ENCODE measurements at regions of chr11 and their contacts with region 1.

Region 1: GRCh38 chr11:101786916-101787315 is 127.9 kb upstream of the CEP126 start:
- DNase-seq: no peak
- H3K4me3 ChIP-seq: no peak overlapping the region
- CTCF ChIP-seq: no peak
- POLR2A ChIP-seq: no peak

Region 2: DNA sequence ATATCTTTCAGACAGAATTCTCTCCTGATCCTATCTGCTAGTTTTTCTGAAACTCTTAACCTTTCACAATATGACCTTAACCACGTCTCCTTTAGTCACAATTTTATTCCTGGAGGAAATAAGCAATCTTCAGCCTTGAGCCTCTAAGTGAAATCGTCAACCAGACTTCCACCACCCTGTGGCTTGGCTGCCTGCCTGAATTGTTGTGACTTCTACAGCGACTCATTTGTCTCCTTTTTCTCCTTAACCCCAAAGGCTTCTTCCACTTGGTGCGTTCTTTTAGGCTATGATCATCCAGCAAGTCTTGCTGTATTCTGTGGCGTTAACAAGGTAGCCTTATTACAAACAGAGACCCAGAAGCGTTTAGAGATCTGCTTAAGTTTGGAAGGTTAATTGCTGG is 1635.0 kb before region 1 on chr11:
- intact Hi-C with region 1: loop called (anchors 5 kb)
- DNase-seq: peak in 1 of 2 donors; percentile 23
- H3K4me3 ChIP-seq: no peak overlapping the region
- CTCF ChIP-seq: no peak
- POLR2A ChIP-seq: no peak

Region 3: GRCh38 chr11:101738452-101738851 is 48.5 kb before region 1 on chr11:
- intact Hi-C with region 1: no loop called
- DNase-seq: no peak
- H3K4me3 ChIP-seq: no peak overlapping the region
- CTCF ChIP-seq: no peak
- POLR2A ChIP-seq: no peak

Region 4: GRCh38 chr11:101848262-101848661 is 61.3 kb after region 1 on chr11:
- intact Hi-C with region 1: no loop called
- DNase-seq: no peak
- H3K4me3 ChIP-seq: no peak overlapping the region
- CTCF ChIP-seq: no peak
- POLR2A ChIP-seq: no peak

Region 5: DNA sequence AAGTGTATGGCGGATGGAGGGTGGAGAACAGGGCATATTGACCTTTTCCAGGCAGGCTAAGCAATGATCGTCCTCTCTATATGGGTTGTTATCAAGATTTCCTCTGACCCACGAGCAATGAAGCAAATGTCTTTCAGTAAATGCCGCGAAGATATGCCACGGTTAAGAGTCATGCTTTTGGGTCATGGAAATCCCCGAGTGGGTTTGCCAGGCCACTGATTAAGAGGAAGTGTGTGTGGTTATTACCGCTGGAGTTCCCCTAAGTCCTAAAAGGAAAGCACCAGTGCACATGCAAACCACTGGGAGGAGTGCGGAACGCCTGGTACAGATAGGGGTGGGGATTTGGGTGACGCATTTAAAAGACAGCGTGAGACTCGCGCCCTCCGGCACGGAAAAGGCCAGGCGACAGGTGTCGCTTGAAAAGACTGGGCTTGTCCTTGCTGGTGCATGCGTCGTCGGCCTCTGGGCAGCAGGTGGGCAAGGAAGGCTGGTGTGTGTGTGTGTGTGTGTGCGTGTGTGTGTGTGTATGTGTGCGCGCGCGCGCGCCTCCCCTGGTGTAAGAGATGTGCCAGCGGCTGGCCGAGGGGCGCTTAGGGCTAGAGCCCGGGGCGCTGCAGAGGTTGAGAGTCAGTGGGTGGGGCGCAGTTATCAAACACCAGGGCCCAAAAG is 530.3 kb after region 1 on chr11 and contains the start of gene BIRC3:
- intact Hi-C with region 1: no loop called
- DNase-seq: peak; percentile 92 to 96
- H3K4me3 ChIP-seq: peak within 1 kb of the TSS; percentile 34
- CTCF ChIP-seq: no peak
- POLR2A ChIP-seq: no peak
- total RNA-seq, gene BIRC3: 10.1 to 17.6 (median 10.8) TPM